Heart left ventricle (tissue), 16 donors: ENCODE measurements at regions of chr17 and their contacts with region 1.

Region 1: DNA sequence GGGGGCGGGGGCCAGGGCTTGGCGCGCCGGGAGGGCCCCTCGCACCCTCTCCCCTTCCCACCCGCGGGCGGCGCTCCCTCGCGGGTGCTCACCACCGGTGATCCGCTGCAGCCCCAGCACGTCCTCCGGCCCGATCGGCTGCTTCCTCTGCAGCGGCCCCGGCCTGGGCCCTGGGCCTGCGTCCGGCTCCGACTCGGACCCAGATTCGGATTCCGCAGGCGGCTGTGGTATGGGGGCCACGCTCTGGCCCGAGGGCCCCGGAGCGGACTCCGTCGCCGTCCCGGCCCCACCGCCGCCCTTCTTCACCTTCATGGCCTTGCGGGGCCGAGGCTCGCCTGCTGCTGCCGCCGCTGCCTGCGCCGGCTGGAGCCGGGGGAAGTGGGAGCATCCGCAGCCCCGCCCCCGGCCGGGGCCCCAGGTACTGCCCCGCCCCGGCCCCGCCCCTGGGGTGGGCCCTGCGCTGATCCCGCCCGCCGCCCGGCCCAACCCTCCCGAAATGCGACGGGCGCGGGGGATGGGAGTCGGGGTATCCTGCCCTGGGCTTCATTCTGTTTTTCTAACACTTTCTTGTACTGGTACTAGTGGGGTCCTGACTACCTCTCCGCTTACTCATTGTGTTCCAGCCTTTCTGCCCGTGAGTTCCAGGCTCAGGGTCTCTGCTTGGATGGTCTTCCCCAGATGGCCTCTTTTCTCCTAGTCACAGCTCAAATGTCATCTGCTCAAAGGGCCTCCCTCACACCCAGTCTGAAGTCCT is at the start of gene UNC119:
- DNase-seq: peak; percentile 73 to 90 (median 86)
- ATAC-seq: peak; percentile 83 to 97 (median 94)
- H3K4me3 ChIP-seq: peak within 1 kb of the TSS; percentile 80 to 98 (median 92)
- H3K27ac ChIP-seq: peak within 1 kb of the TSS in 11 of 12 donors; percentile 47 to 85 (median 70)
- H3K4me1 ChIP-seq: peaks cover 0 to 50% (median 15%) of the 10 kb centered on the region in 12 donors
- H3K27me3 ChIP-seq: no peaks in the 10 kb centered on the region
- CTCF ChIP-seq: no peak
- POLR2A ChIP-seq: peak in 1 of 2 donors; percentile 76
- total RNA-seq, gene UNC119: 12.8 to 30.7 (median 19.2) TPM

Region 2: DNA sequence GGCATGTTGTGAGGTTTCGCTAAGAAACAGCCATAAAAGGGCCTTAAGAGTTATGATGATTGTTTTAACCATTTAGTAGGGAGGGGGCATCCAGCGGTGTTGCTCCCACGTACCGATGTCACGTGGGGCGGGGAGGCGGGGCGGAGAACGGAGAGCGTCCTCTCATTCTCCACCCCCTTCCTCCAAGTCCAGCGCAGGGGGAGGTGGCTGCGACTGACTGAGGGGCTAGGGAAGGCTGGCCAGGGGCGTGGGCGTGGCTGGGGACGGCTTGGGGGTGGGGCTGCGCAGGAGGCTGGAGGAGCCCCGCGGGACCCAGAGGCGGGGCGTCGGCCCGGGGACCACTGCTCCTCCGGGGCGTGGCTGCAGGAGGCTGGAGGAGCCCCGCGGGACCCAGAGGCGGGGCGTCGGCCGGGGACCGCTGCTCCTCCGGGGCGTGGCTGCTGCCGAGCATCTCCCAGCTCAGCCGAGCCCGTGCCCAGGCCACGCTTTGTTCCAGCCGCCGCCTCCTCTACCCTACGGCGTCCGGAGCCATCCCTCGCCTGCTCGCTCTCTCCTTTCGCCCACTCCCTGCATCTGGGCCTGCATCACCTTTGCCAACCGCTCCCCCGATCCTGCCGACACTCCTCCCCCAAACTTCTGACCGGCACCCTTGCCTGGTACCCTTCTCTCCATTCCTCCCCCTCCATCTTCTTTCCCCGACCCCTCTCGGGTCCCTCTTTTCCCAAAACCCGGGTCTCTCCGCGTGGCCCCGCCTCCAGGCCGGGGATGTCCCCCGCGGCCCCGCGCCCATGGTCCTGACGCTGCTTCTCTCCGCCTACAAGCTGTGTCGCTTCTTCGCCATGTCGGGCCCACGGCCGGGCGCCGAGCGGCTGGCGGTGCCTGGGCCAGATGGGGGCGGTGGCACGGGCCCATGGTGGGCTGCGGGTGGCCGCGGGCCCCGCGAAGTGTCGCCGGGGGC is 180.9 kb before region 1 on chr17 and contains the start of gene SARM1:
- intact Hi-C with region 1: no loop called
- DNase-seq: peak; percentile 91 to 95 (median 92)
- ATAC-seq: peak; percentile 78 to 90 (median 82)
- H3K4me3 ChIP-seq: peak within 1 kb of the TSS; percentile 47 to 85 (median 64)
- H3K27ac ChIP-seq: peak within 1 kb of the TSS; percentile 47 to 86 (median 78)
- H3K4me1 ChIP-seq: peaks cover 7 to 39% (median 25%) of the 10 kb centered on the region in 12 donors
- H3K27me3 ChIP-seq: no peaks in the 10 kb centered on the region
- CTCF ChIP-seq: no peak
- POLR2A ChIP-seq: peak in 1 of 2 donors; percentile 27
- total RNA-seq, gene SARM1: 4.7 to 11.3 (median 8.5) TPM

Region 3: DNA sequence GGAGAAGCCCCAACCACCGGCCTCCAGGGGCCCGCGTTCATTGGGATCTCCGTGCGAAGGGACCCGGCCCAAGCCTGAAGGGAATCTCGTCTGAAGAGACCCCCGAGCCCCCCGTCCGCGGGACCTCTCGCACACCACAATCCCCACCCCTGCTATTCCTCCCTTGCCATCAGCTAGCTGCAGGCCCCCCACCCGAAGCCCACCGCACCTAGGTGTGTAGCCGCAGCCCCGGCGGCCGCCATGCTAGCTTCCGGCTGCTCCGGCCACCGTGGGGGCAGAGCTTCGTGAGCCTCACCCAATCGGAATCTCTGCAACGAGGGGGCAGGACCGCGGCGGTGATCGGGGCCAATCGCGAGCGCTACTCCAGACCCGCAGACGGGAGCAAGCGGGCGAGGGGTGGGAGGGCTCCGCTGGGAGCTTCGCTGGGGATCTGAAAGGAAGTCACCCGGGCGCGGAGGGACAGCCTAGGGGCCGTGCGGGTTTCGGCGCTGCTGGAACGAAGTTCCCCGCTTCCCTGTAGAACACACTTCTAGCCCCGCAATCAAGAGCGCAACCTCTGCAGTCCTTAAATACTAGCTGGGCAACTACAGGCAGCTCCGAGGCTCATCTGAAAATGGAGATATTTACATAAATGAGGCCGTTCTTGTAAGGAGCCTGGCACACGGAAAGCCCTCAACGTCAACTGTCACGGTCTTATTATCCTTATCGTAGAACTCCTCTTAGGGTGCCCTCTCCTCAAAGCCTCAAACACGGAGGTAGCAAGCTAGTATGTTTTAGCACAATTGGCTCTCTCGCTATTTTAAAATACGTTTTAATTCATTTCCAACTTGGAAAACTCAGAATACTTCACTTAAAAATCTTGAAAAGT is 19.1 kb after region 1 on chr17 and contains the start of gene PIGS:
- intact Hi-C with region 1: loop called in 2 of 10 experiments (anchors 2 kb)
- DNase-seq: peak; percentile 96 to 98 (median 97)
- ATAC-seq: peak; percentile 91 to 95 (median 92)
- H3K4me3 ChIP-seq: peak within 1 kb of the TSS; percentile 73 to 100 (median 92)
- H3K27ac ChIP-seq: peak within 1 kb of the TSS in 11 of 12 donors; percentile 75 to 93 (median 81)
- H3K4me1 ChIP-seq: peaks cover 0 to 53% (median 24%) of the 10 kb centered on the region in 12 donors
- H3K27me3 ChIP-seq: no peaks in the 10 kb centered on the region
- CTCF ChIP-seq: peak in 1 of 12 donors; percentile 14
- POLR2A ChIP-seq: peak in 1 of 2 donors; percentile 89
- total RNA-seq, gene PIGS: 44.7 to 83.1 (median 55.1) TPM

Region 4: GRCh38 chr17:28612936-28613872 is 60.8 kb after region 1 on chr17:
- intact Hi-C with region 1: loop called in 9 of 10 experiments (anchors 1 to 10 kb)
- DNase-seq: no peak
- ATAC-seq: peak; percentile 12 to 60 (median 42)
- H3K4me3 ChIP-seq: no peak overlapping the region
- H3K27ac ChIP-seq: no peak overlapping the region
- H3K4me1 ChIP-seq: no peaks in the 10 kb centered on the region
- H3K27me3 ChIP-seq: no peaks in the 10 kb centered on the region
- CTCF ChIP-seq: peak; percentile 52 to 79 (median 68)
- POLR2A ChIP-seq: no peak

Region 5: DNA sequence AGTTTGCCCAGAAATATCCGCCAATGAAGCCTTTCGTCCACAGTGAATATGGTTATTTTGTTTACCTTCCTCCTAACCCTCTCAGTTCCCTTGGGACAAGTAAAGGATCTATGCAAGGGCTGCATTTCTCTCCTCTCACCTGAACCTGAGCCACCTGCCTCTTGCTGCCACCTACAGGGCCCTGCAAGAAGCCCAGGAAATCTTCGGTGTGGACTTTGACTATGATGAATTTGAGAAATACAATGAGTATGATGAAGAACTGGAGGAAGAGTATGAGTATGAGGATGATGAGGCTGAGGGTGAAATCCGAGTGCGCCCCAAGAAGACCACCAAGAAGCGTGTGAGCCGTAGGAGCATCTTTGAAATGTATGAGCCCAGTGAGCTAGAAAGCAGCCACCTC is 123.6 kb after region 1 on chr17:
- intact Hi-C with region 1: no loop called
- DNase-seq: no peak
- ATAC-seq: no peak
- H3K4me3 ChIP-seq: no peak overlapping the region
- H3K27ac ChIP-seq: no peak overlapping the region
- H3K4me1 ChIP-seq: no peaks in the 10 kb centered on the region
- H3K27me3 ChIP-seq: no peaks in the 10 kb centered on the region
- CTCF ChIP-seq: peak in 2 of 12 donors; percentile 8 to 9
- POLR2A ChIP-seq: no peak